ENCODE measurements at regions of chr14 and their contacts with region 1.

Region 1: GRCh38 chr14:32252030-32252670 is 49.1 kb upstream of the RNU6-8 start:
- H3K4me3 ChIP-seq: no peak overlapping the region
- H3K27ac ChIP-seq: no peak overlapping the region
- H3K4me1 ChIP-seq: no peaks in the 10 kb centered on the region
- CTCF ChIP-seq: peak; percentile 55

Region 2: DNA sequence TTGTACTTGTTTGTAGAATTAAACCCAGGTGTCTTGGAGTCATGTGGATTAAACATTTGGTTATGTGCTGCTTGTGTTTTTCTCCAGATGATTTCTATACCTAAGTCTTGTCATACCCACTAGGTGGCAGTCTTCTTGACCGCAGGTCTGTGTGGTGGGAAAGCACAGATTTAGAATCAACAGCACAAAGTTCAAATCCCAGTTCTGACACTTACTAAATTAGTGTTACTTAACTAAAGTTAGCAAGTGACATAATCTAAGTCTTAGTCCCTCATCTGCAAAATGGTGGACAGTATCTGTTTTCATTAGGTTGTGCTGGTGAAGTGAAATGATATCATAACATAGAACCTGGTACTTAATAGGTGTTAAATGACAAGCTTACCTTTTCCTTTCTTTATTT is 326.0 kb before region 1 on chr14:
- CTCF ChIA-PET with region 1: interaction called, 38 read pairs
- POLR2A ChIA-PET with region 1: no interaction called
- H3K4me3 ChIP-seq: no peak overlapping the region
- H3K27ac ChIP-seq: no peak overlapping the region
- H3K4me1 ChIP-seq: peaks cover 9% of the 10 kb centered on the region
- CTCF ChIP-seq: no peak

Region 3: GRCh38 chr14:32076278-32077080 is 175.7 kb before region 1 on chr14:
- CTCF ChIA-PET with region 1: interaction called, 29 read pairs
- POLR2A ChIA-PET with region 1: interaction called, 3 read pairs
- H3K4me3 ChIP-seq: peak overlapping the region; percentile 88
- H3K27ac ChIP-seq: peak overlapping the region; percentile 99
- H3K4me1 ChIP-seq: peaks cover 5% of the 10 kb centered on the region
- CTCF ChIP-seq: no peak

Region 4: GRCh38 chr14:32469388-32470160 is 217.4 kb after region 1 on chr14:
- CTCF ChIA-PET with region 1: interaction called, 24 read pairs
- POLR2A ChIA-PET with region 1: interaction called, 3 read pairs
- H3K4me3 ChIP-seq: no peak overlapping the region
- H3K27ac ChIP-seq: no peak overlapping the region
- H3K4me1 ChIP-seq: 0 out of 2 replicates have a peak, but pooled peaks cover 2% of the 10 kb centered on the region
- CTCF ChIP-seq: peak; percentile 51; the same call in 1 of the 2 replicates

Region 5: GRCh38 chr14:32560209-32560857 is 308.2 kb after region 1 on chr14:
- CTCF ChIA-PET with region 1: interaction called, 20 read pairs
- POLR2A ChIA-PET with region 1: no interaction called
- H3K4me3 ChIP-seq: no peak overlapping the region
- H3K27ac ChIP-seq: no peak overlapping the region
- H3K4me1 ChIP-seq: peaks cover 4% of the 10 kb centered on the region; the same call in 1 of the 2 replicates
- CTCF ChIP-seq: peak; percentile 72; the same call in 1 of the 2 replicates